WTC11 (cell line): ENCODE measurements at regions of chr3 and their contacts with region 1.

Region 1: GRCh38 chr3:124761250-124761796 is 31.1 kb downstream of the UMPS start:
- DNase-seq: peak; percentile 80
- ATAC-seq: peak; percentile 55
- H3K4me3 Mint-ChIP-seq: no peak overlapping the region
- H3K27ac Mint-ChIP-seq: peak overlapping the region; percentile 47
- H3K4me1 Mint-ChIP-seq: peaks cover 45% of the 10 kb centered on the region
- H3K27me3 Mint-ChIP-seq: no peaks in the 10 kb centered on the region
- CTCF ChIP-seq: peak; percentile 87

Region 2: DNA sequence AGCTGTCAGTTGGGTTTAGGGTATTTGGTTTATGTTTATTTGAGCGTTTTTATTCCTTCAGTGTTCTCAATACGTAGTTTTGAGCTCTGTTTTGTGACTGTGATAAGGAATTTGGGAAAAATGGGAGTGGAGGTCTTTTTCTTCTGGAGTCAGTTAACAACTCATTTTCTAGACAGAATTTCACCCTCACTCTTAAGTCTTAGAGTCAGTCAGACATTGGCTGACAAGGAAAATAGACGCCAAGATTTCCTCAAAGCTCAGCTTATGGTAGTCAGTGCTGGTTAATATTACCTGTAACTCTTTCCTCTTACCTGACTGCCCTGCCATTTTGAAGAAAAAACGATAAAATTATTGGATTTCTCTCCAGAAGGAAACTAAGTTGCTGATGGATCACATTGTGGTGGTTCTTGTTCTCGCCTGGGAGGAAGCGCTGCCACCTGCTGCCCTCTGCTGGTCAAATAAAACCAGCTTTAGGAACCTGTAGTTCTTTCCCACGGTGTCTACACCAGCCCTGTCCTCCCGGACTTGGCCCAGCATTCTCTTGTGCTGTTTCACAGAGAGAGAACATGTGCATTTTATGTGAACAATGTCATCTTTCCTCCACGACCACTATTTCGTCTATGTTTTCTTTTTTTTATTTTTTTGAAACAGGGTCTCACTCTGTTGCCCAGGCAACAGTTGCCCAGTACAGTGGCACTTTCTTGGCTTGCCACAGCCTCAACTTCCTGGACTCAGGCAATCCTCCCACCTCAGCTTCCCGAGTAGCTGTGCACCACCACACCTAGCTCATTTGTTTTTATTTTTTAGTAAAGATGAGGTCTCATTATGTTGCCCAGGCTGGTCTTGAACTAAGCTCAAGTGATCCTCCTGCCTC is 72.5 kb before region 1 on chr3:
- CTCF ChIA-PET with region 1: interaction called, 10 read pairs
- POLR2A ChIA-PET with region 1: no interaction called
- DNase-seq: peak; percentile 83
- ATAC-seq: peak; percentile 86
- H3K4me3 Mint-ChIP-seq: no peak overlapping the region
- H3K27ac Mint-ChIP-seq: no peak overlapping the region
- H3K4me1 Mint-ChIP-seq: peaks cover 8% of the 10 kb centered on the region; the same call in 1 of the 2 replicates
- H3K27me3 Mint-ChIP-seq: no peaks in the 10 kb centered on the region
- CTCF ChIP-seq: peak; percentile 80

Region 3: GRCh38 chr3:124786441-124787241 is 25.3 kb after region 1 on chr3:
- CTCF ChIA-PET with region 1: interaction called, 22 read pairs
- POLR2A ChIA-PET with region 1: no interaction called
- DNase-seq: no peak
- ATAC-seq: no peak
- H3K4me3 Mint-ChIP-seq: no peak overlapping the region
- H3K27ac Mint-ChIP-seq: peak overlapping the region; percentile 88
- H3K4me1 Mint-ChIP-seq: peaks cover 12% of the 10 kb centered on the region
- H3K27me3 Mint-ChIP-seq: no peaks in the 10 kb centered on the region
- CTCF ChIP-seq: no peak

Region 4: GRCh38 chr3:124890282-124891190 is 129.2 kb after region 1 on chr3:
- CTCF ChIA-PET with region 1: interaction called, 20 read pairs
- POLR2A ChIA-PET with region 1: no interaction called
- DNase-seq: no peak
- ATAC-seq: no peak
- H3K4me3 Mint-ChIP-seq: no peak overlapping the region
- H3K27ac Mint-ChIP-seq: peak overlapping the region; percentile 97
- H3K4me1 Mint-ChIP-seq: peaks cover 40% of the 10 kb centered on the region
- H3K27me3 Mint-ChIP-seq: no peaks in the 10 kb centered on the region
- CTCF ChIP-seq: no peak

Region 5: DNA sequence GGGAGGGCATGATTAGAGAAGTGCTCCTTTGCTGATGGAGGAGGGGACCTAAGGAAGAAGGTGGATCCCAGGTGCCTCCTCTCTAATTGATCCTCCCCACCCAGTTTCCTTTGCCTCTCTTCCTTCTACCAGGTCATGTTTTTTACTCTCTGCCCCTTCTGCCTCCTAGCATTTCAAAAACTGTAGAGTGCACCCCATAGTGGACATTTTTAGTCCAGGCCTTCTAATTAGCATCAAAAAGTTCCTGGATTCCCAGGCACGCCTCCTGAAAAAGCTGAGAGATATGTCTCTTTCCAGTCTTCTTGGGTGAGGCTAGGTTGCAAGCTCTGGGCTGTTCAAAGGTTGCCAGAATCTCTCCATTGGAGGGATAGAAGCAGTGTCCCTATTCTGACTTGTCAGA is 144.5 kb after region 1 on chr3:
- CTCF ChIA-PET with region 1: interaction called, 51 read pairs
- POLR2A ChIA-PET with region 1: no interaction called
- DNase-seq: no peak
- ATAC-seq: no peak
- H3K4me3 Mint-ChIP-seq: no peak overlapping the region
- H3K27ac Mint-ChIP-seq: no peak overlapping the region
- H3K4me1 Mint-ChIP-seq: peaks cover 14% of the 10 kb centered on the region
- H3K27me3 Mint-ChIP-seq: peaks cover 3% of the 10 kb centered on the region; the same call in 1 of the 2 replicates
- CTCF ChIP-seq: no peak

Region 6: DNA sequence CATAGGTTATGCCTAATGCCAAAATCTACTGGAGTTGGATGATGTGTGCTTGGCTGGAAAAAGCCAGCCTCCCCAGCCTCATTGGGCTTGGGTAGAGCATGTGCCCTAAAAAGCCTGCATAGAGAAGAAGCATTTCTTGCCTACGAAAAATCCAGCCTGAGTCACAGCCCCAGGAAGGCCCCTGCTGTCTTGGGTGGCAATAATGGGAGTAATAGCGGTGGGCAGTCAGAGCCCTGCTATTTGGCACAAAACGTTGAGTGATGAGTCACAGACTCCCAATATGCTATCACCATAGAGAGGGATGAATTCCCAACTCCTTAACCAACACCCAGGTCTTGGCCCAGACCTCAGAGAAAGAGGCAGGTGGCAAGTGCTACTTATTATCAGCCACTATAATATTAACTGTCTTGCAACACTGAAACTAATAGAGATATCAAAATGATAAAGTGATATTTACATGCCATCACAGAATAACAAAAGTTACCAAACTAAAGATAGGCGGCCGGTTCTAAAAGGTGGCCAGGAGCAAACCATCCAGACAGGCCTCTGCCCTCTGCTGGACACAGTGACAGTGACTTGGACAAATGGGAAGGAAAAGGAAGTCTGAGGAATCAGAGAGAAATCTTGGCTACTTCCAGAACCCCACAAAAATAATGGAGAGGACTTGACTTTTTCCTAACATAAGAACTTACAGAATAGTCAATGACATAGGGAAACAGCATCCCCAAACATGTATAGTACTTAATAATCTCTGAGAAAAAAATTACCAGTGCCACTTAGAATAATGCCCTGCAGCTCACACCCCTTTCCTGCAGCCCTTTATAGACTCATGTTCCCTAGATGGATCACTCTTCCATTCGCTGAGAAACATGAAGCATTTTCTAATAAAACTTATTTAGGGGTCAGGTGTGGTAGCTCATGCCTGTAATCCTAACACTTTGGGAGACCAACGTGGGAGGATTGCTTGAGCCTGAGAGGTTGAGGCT is 225.1 kb after region 1 on chr3:
- CTCF ChIA-PET with region 1: interaction called, 12 read pairs
- POLR2A ChIA-PET with region 1: no interaction called
- DNase-seq: peak; percentile 34
- ATAC-seq: peak; percentile 57
- H3K4me3 Mint-ChIP-seq: no peak overlapping the region
- H3K27ac Mint-ChIP-seq: no peak overlapping the region
- H3K4me1 Mint-ChIP-seq: peaks cover 9% of the 10 kb centered on the region
- H3K27me3 Mint-ChIP-seq: no peaks in the 10 kb centered on the region
- CTCF ChIP-seq: no peak